ENCODE measurements at regions of chr14 and their contacts with region 1.

Region 1: DNA sequence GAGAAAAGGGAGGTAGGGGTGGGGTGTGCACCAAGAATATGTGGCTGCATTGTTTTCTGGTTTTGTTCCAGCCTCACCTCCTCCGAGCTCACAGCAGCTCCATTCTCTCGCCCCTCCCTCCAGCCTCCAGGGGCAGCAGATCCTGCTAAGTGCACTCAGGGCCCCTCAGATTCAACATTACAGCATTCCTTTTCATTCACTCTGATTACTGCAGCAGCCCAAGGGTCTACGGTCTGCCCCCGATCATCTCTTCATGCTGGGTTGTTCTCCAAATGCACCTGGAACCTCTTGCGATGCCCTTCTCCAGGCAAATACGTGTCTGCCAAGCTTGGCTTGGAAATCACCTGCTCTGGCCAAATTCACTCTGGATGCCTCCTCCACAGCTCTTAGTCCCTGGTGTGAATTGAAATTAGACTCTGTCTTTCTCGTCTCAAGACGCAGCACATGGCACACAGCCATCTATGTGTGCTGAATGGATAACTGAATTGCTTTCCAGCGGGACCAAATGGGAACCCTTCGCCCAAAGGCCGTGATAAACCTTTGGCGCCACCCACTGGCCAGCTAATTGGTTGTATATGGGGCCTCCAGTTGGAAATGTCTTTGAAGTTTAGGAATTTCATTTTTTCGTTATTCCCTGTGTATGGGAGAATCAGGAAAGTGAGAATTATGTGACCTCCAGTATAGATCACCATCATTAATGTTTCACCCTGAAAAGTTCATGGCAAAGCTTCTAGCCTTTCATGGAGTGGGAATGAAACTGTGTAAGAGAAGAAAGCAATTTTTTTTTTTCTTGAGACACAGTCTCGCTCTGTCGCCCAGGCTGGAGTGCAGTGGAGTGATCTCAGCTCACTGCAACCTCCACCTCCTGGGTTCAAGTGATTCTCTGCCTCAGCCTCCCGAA is 9.6 kb upstream of the HSP90AA1 start:
- DNase-seq: peak; percentile 83 to 84 (median 83)
- ATAC-seq: peak; percentile 91 to 94 (median 92)
- H3K4me3 ChIP-seq: no peak overlapping the region
- H3K27ac ChIP-seq: no peak overlapping the region
- H3K4me1 ChIP-seq: no peaks in the 10 kb centered on the region
- H3K27me3 ChIP-seq: no peaks in the 10 kb centered on the region
- CTCF ChIP-seq: peak; percentile 76 to 90 (median 83)
- POLR2A ChIP-seq: no peak

Region 2: DNA sequence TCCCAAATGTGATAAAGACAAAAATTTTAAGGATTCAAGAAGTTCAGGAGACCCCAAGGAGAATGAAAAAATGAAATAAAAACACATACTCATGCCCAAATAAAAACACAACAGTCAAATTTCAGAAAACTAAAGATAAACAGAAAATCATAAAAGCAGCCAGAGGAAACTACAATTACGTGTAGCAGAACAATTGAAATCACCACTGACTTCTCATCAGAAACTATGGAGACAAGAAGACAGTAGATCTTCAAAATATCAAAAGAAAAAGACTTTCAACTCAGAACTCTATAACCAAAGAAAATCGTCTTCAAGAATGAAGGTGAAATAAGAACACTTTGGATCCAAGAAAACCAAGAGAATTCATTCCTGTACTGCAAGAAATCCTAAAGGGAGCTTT is 480.3 kb before region 1 on chr14:
- intact Hi-C with region 1: no loop called
- DNase-seq: no peak
- ATAC-seq: no peak
- H3K4me3 ChIP-seq: no peak overlapping the region
- H3K27ac ChIP-seq: no peak overlapping the region
- H3K4me1 ChIP-seq: no peaks in the 10 kb centered on the region
- H3K27me3 ChIP-seq: no peaks in the 10 kb centered on the region
- CTCF ChIP-seq: no peak
- POLR2A ChIP-seq: no peak

Region 3: GRCh38 chr14:101707068-101707842 is 389.2 kb before region 1 on chr14:
- intact Hi-C with region 1: loop called in 1 of 2 experiments (anchors 10 kb)
- DNase-seq: peak in 1 of 3 donors; percentile 54
- ATAC-seq: peak; percentile 71 to 85 (median 83)
- H3K4me3 ChIP-seq: no peak overlapping the region
- H3K27ac ChIP-seq: peak overlapping the region in 1 of 3 donors; percentile 29
- H3K4me1 ChIP-seq: peaks cover 0 to 15% (median 4%) of the 10 kb centered on the region in 4 donors
- H3K27me3 ChIP-seq: no peaks in the 10 kb centered on the region
- CTCF ChIP-seq: peak; percentile 79 to 93 (median 83)
- POLR2A ChIP-seq: no peak

Region 4: GRCh38 chr14:102046343-102047278 is 49.9 kb before region 1 on chr14:
- intact Hi-C with region 1: loop called in 1 of 2 experiments (anchors 5 kb)
- DNase-seq: peak; percentile 70 to 82 (median 73)
- ATAC-seq: peak; percentile 74 to 89 (median 86)
- H3K4me3 ChIP-seq: no peak overlapping the region
- H3K27ac ChIP-seq: no peak overlapping the region
- H3K4me1 ChIP-seq: no peaks in the 10 kb centered on the region
- H3K27me3 ChIP-seq: no peaks in the 10 kb centered on the region
- CTCF ChIP-seq: peak; percentile 19 to 50 (median 42)
- POLR2A ChIP-seq: no peak